Ovary (tissue), 10 donors: ENCODE measurements at regions of chr1 and their contacts with region 1.

Region 1: DNA sequence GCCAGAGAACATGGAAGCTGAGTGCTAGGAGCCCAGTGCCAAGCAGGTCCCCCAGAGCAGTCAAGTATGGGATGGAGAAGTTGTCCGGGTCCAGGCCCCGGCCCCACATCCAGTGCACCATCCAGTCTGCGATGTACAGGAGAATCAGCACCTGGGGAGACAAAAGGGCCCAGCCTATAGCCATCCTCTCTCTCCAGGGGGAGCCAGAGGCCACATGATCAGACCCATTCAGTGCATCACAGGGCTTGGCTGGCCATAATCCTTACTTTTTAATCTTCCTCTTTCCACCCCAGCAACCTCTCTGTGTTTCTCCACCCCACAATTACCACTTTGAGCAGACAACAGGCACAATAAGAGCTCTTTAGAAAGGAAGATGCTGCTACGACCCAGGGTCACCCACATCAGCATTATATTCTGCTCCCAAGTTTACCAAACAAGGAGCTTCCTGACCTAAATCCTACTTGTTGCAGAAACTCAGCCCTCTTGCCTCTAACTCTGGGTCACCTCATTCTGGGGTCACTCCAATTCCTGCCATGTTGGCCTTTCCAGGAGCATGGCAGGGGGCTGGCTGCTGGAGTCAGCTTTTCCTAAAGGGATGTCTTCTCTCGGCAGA is 16.4 kb upstream of the RAB29 start:
- DNase-seq: peak; percentile 67 to 79 (median 74)
- H3K4me3 ChIP-seq: no peak overlapping the region
- H3K27ac ChIP-seq: no peak overlapping the region
- H3K4me1 ChIP-seq: no peaks in the 10 kb centered on the region
- H3K27me3 ChIP-seq: no peaks in the 10 kb centered on the region
- CTCF ChIP-seq: peak; percentile 61 to 75 (median 69)
- EP300 ChIP-seq: no peak
- POLR2A ChIP-seq: no peak

Region 2: DNA sequence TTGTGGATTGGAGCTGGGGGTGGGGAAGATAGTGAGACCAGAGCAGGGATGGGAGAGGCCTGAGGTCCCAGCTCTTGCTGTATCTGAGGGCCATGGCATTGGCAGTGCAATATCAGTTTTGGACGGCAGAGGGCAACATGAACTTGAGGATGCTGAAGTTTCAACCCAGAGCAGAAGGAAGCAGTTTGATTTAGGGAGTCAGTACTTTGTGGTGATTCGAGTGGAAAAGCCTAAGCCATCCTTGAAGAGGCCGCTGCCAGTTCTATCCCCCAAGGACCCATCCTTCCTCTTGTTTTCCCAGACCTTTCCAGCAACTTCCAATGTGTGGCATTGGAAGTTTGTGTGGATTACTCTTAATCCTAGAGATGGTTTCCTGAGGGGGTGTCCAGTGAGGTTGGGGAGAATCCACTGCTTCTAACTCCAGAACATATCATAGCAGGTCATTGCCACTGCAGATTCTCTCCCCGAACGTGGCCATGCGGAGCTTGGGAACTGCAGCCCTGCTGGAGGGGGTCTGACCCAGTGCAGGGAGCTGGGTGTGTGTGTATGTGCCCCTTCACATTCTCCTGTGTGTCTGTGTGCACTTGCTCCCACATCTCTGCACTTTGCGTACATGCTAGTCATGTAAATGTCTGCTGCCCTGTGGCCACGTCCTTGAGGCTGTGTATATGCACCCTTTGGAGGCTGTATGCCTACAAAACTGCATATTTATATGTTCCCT is 127.5 kb after region 1 on chr1:
- intact Hi-C with region 1: loop called in 3 of 4 experiments (anchors 10 kb)
- DNase-seq: peak; percentile 59 to 75 (median 72)
- H3K4me3 ChIP-seq: no peak overlapping the region
- H3K27ac ChIP-seq: no peak overlapping the region
- H3K4me1 ChIP-seq: peaks cover 13% of the 10 kb centered on the region
- H3K27me3 ChIP-seq: no peaks in the 10 kb centered on the region
- CTCF ChIP-seq: peak; percentile 57 to 69 (median 58)
- EP300 ChIP-seq: no peak
- POLR2A ChIP-seq: no peak

Region 3: DNA sequence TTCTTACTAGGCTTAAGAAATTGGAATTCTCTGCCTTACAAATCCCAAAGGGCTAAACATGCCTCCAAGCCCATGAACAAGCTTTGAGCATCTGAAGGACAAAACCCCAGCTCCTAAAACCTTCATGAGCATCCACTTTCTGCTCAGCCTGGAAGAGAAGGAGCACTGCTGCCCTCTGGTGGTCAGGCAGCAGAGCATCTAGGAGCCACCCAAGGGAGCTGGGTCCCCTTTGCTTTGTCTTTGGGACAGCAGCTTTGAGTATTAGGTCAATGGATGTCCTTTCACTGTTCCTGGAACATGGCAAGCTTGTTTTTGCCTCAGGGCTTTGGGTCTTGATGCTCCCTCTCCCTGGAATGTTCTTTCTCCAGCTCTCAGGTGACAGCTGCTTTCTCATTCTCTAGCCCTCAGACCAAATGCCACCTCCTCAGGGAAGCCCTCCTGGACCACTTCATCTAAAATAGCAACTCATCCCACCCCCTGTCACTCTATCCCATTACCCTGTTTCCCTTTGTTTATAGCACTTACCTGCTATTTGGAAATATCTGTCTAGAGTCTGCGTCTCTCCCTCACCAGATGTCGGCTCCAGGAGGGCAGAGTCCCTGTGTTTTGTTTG is 185.8 kb after region 1 on chr1:
- intact Hi-C with region 1: loop called (anchors 2 to 5 kb)
- DNase-seq: peak; percentile 67 to 86 (median 78)
- H3K4me3 ChIP-seq: no peak overlapping the region
- H3K27ac ChIP-seq: no peak overlapping the region
- H3K4me1 ChIP-seq: peaks cover 4% of the 10 kb centered on the region
- H3K27me3 ChIP-seq: no peaks in the 10 kb centered on the region
- CTCF ChIP-seq: peak; percentile 80 to 91 (median 87)
- EP300 ChIP-seq: no peak
- POLR2A ChIP-seq: no peak

Region 4: GRCh38 chr1:206106328-206107167 is 314.9 kb after region 1 on chr1:
- intact Hi-C with region 1: loop called in 1 of 4 experiments (anchors 5 kb)
- DNase-seq: peak; percentile 67 to 86 (median 81)
- H3K4me3 ChIP-seq: no peak overlapping the region
- H3K27ac ChIP-seq: no peak overlapping the region
- H3K4me1 ChIP-seq: peaks cover 2% of the 10 kb centered on the region
- H3K27me3 ChIP-seq: no peaks in the 10 kb centered on the region
- CTCF ChIP-seq: peak; percentile 65 to 76 (median 74)
- EP300 ChIP-seq: no peak
- POLR2A ChIP-seq: no peak